Activated CD4-positive, alpha-beta T cell treated with anti-CD3 and anti-CD28 coated beads for 36 hours (primary cell): ENCODE measurements at regions of chr3 and their contacts with region 1.

Region 1: DNA sequence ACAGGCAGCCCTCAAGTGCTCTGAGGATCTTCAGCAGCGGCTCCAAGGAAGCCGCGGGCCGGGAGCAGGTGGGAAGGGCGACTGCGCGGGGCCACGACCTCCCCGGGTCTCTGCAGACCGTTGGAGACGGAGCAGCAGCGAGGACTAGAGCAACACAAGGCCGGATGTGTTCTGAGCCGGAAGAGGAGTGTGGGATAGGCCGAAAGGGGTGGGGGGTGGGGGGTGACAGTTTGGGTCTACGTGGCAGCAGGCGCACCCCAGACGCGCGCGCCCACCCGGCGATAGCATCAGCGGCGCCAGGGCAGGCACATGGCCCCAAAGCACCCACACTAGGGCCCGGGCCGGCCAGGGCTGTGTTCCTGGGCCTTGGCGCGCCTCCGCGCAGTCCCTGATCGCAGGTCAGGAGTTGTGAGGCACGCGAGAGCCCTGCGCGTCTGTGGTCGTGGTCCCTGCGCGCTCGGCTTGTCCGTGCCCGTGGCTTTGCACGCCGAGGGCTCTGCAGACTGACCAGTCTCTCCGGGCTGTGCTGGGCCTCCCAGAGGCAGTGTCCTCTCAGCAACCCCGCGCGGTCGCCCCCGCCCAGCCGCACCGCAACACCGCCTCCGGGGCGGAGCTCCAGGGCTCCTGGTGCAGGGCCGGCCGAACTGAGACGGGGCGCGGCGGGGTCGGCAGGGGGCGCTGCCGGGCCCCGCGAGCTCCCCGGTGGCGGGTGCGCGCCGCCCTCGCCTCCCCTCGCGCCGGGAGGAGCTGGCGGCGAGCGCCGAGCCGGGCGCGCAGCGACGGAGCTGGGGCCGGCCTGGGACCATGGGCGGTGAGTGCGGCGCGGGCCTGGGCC is at the start of gene PXYLP1:
- DNase-seq: peak; percentile 95
- ATAC-seq: peak; percentile 92
- H3K4me3 Mint-ChIP-seq: peak within 1 kb of the TSS; percentile 94
- H3K27ac Mint-ChIP-seq: peak within 1 kb of the TSS; percentile 98
- H3K4me1 Mint-ChIP-seq: peaks cover 48% of the 10 kb centered on the region
- H3K27me3 Mint-ChIP-seq: no peaks in the 10 kb centered on the region
- total RNA-seq, gene PXYLP1: 10.3 to 12.2 TPM

Region 2: DNA sequence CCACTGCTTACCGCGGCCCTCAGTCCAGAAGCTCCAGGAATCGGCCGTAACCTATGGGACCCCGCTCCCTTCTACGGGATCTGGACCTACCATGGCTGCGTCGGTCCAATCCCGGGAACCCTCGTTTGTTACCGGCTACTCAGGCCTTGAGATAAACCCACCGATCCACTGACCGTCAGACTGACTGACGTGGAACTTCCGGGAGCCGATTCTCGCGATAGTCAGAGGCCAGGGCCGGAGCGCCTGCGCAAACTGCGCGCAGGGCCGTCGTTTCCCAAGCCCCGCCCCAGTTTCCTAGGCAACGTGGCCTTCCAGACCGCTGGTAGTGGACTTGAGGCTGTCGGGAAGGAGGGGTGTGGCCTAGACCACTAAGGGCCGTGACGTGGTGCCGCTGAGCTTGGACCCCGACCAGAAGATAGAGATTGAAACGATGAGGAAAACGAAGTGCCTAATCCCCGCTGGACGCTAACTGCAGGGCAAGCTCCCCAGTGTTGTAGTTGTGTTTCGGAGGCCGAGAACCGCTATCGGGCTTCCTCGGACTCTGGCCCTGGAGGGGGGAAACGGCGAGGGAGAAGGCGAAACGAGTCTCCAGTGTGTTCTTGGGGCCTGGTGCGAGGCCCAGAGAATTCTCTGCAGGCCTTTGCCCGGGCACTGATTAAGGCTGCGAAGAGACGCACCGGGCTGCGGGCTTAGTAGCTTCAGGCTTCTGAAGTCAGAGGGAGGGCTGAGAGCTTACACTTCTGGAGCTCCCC is 1841.7 kb before region 1 on chr3 and contains the start of gene COPB2:
- CTCF ChIA-PET with region 1: no interaction called
- POLR2A ChIA-PET with region 1: no interaction called
- intact Hi-C with region 1: loop called in 1 of 2 experiments (anchors 2 kb)
- DNase-seq: peak; percentile 98
- ATAC-seq: peak; percentile 93
- H3K4me3 Mint-ChIP-seq: peak within 1 kb of the TSS; percentile 96
- H3K27ac Mint-ChIP-seq: peak within 1 kb of the TSS; percentile 97
- H3K4me1 Mint-ChIP-seq: peaks cover 38% of the 10 kb centered on the region
- H3K27me3 Mint-ChIP-seq: no peaks in the 10 kb centered on the region
- total RNA-seq, gene COPB2: 90.9 to 99.2 TPM

Region 3: DNA sequence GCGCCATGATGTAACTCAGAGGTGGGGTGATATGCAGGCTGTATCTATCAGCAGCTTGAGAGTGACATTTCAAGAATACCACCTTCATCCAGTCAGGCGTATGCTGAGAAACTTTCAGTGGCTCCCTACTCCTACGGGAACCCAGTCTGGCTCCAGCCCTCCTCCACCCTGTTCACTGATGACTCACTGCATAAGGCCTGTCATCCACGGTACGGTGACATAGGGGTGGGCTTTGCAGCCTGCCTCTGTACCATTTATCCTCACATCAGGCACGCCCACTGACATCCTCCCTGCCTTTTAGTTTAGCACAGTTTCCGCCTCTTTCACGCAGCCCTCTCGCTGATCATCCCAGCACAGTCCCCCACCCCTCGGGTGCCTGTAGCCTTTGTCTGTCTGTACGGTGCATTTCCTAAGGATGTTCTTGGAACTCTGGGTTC is 12.0 kb after region 1 on chr3:
- CTCF ChIA-PET with region 1: interaction called, 26 read pairs
- POLR2A ChIA-PET with region 1: interaction called, 7 read pairs
- intact Hi-C with region 1: no loop called
- DNase-seq: peak; percentile 82
- ATAC-seq: peak; percentile 98
- H3K4me3 Mint-ChIP-seq: peak overlapping the region; percentile 7
- H3K27ac Mint-ChIP-seq: peak overlapping the region; percentile 49
- H3K4me1 Mint-ChIP-seq: peaks cover 43% of the 10 kb centered on the region
- H3K27me3 Mint-ChIP-seq: no peaks in the 10 kb centered on the region

Region 4: GRCh38 chr3:141279077-141279967 is 48.0 kb after region 1 on chr3:
- CTCF ChIA-PET with region 1: interaction called, 18 read pairs
- POLR2A ChIA-PET with region 1: interaction called, 4 read pairs
- intact Hi-C with region 1: loop called (anchors 1 kb)
- DNase-seq: peak; percentile 32
- ATAC-seq: peak; percentile 56
- H3K4me3 Mint-ChIP-seq: no peak overlapping the region
- H3K27ac Mint-ChIP-seq: peak overlapping the region; percentile 59
- H3K4me1 Mint-ChIP-seq: peaks cover 17% of the 10 kb centered on the region
- H3K27me3 Mint-ChIP-seq: no peaks in the 10 kb centered on the region

Region 5: GRCh38 chr3:141553055-141553454 is 321.7 kb after region 1 on chr3:
- CTCF ChIA-PET with region 1: no interaction called
- POLR2A ChIA-PET with region 1: no interaction called
- intact Hi-C with region 1: loop called in 1 of 2 experiments (anchors 10 kb)
- DNase-seq: no peak
- ATAC-seq: peak; percentile 63
- H3K4me3 Mint-ChIP-seq: no peak overlapping the region
- H3K27ac Mint-ChIP-seq: peak overlapping the region; percentile 88
- H3K4me1 Mint-ChIP-seq: peaks cover 53% of the 10 kb centered on the region
- H3K27me3 Mint-ChIP-seq: no peaks in the 10 kb centered on the region

Region 6: GRCh38 chr3:142447852-142448823 is 1216.8 kb after region 1 on chr3 and contains the start of gene XRN1:
- CTCF ChIA-PET with region 1: no interaction called
- POLR2A ChIA-PET with region 1: no interaction called
- intact Hi-C with region 1: loop called in 1 of 2 experiments (anchors 10 kb)
- DNase-seq: peak; percentile 98
- ATAC-seq: peak; percentile 85
- H3K4me3 Mint-ChIP-seq: peak within 1 kb of the TSS; percentile 95
- H3K27ac Mint-ChIP-seq: peak within 1 kb of the TSS; percentile 98
- H3K4me1 Mint-ChIP-seq: peaks cover 32% of the 10 kb centered on the region
- H3K27me3 Mint-ChIP-seq: no peaks in the 10 kb centered on the region
- total RNA-seq, gene XRN1: 54.2 to 117 TPM